OCI-LY7 (cell line): ENCODE measurements at regions of chr1 and their contacts with region 1.

Region 1: DNA sequence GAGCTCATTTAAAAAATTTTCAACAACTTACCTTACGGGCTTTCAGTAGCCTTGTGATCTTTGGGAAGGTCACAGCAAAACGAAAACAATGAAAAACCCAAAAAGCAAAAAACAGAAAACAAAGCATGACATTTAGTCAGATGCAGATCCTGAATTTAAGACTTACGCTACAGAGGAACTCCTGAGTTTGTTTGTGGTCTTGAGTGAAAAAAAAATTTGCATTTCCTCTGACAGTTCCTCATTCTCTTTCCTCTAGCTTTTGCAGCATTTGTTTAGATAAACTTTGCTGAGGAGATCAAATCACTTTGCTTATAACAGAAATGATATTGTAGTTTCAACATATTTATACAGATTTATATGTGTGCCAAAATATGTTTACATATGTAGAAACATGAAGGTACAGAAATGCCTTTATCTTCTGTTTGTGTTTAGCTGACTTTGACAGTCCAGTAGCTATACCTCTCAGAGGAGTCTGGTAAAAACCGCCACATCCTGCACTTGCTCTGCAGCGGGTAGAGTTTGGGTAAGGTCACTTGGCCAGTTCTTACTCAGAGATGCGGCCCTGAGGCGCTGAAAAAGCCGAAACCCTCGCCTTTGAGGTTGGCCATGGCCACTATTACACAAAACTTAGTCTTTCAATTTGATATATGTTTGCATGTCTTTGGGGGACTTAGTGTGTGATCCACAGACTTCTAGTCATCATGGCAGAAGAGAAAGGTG is 142.5 kb downstream of the TNR start:
- DNase-seq: peak; percentile 72
- H3K4me3 ChIP-seq: peak overlapping the region; percentile 59
- H3K27ac ChIP-seq: peak overlapping the region; percentile 70
- H3K4me1 ChIP-seq: peaks cover 52% of the 10 kb centered on the region
- CTCF ChIP-seq: no peak

Region 2: DNA sequence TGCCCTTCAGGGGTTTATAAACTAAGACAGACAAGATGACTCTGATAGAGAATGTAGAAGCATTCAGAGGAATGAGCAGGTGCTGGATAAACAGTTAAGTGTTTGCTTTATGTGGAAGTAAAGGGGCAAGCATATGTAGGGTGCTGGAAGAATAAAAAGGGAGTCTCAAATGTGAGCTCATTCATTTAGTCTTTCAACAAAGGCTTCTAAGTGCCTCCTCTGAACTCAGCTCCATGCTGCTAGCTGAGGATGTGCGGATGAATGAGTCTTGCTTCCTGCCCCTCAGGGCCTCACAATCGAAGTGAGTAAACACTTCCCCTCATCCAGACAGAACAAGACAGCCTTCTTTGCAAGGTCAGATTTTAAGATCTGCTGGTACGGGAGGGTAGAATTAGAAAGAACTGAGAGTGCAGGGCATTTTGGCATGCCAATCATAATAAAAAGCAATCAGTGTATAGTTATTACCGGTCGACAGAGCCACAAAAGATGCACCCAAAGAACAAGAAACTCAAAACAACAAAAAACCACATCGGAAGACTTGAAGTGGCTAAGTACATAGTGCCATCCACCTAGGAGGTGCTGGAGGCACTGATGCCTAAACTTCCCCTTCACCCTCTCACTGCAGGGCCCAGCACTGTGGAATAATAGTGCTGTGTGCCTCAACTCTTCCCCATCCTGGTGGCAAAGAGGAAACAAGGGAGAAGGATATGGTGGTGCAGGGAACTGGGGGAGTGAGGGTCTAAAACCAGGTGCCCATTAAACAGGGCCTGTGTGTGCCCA is 72.7 kb after region 1 on chr1:
- CTCF ChIA-PET with region 1: interaction called, 10 read pairs
- POLR2A ChIA-PET with region 1: interaction called, 3 read pairs
- intact Hi-C with region 1: loop called (anchors 1 kb)
- DNase-seq: peak; percentile 92
- H3K4me3 ChIP-seq: peak overlapping the region; percentile 55
- H3K27ac ChIP-seq: peak overlapping the region; percentile 94
- H3K4me1 ChIP-seq: peaks cover 79% of the 10 kb centered on the region
- CTCF ChIP-seq: no peak

Region 3: DNA sequence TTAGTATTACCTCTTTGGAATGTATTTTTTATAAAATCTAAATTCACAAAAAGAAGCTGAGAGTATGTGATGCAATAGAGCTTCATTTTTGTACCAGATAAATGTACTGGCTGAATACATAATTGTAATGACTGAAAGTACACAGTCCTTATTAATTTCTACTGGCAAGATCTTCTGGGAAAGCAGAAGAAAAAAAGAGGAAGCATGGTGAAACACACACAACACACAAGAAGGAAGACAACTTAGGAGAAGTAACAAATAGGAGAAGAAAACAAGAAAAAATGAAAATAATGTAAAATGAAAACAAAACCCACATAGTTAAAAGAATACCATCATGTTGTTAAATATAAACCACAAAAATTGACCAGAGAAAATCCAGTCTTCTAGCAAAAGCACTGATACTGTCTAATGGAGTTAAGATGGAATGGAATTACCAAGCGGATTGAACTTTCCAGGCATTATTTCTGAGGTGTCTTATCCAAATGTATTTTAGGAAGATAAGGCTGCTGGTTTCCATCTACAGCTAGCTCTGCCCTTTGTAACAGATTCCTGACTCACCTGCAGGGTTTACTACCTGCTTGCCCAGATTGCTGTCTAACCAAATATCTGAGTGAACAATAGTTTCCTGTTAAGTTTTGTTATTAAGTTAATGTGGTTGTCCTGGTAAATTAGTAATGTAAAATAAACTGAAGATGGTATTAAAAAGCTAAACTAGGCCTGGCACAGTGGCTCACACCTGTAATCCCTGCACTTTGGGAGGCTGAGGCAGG is 610.7 kb after region 1 on chr1:
- CTCF ChIA-PET with region 1: no interaction called
- POLR2A ChIA-PET with region 1: no interaction called
- intact Hi-C with region 1: no loop called
- DNase-seq: no peak
- H3K4me3 ChIP-seq: no peak overlapping the region
- H3K27ac ChIP-seq: no peak overlapping the region
- H3K4me1 ChIP-seq: peaks cover 7% of the 10 kb centered on the region
- CTCF ChIP-seq: no peak